Calu3 (cell line): ENCODE measurements at regions of chr19 and their contacts with region 1.

Region 1: DNA sequence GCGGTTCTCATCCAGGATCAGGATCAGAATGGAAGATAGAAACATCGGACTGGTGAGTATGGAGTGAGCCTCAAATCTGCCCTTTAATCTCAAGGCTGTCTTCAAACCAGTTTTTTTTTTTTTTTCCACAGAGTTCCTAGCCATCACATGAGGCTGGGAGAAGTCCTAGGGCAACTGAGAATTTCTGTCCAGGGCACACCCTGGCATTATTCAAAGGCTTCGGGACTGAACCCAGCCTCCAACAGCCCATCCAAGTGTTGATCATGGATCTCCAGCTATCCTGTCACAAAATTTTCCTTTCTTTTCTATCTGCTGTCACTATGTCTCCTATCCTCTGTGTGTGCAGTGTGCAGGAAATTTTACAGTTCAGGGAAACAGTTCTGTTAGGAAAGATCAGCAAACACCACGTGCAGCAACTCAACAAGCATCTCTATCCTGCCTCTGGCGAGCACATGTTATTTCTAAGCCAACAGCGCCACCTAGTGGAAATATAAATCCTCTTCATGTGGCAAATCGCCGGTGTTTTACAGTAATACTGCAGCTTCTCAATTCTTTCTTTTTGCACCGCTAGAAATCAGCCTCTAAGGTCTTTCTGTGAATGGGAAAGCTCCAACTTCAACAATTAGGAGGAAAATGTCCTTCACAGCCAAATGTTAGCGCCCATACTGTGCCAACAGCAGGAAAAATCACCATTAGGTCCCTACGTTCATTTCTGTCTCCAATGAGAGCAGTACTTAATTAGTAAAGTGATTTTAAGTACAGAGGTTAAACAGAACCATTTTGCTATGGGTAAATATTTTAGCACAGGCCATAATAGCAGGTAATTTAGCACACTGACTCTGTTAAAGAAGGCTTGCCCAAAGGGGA is 21.4 kb upstream of the ZNF181 start:
- DNase-seq: peak; percentile 68
- H3K4me3 Mint-ChIP-seq: no peak overlapping the region
- H3K27ac Mint-ChIP-seq: no peak overlapping the region
- H3K4me1 Mint-ChIP-seq: no peaks in the 10 kb centered on the region
- H3K27me3 Mint-ChIP-seq: no peaks in the 10 kb centered on the region
- CTCF ChIP-seq: peak; percentile 77

Region 2: GRCh38 chr19:34375598-34375997 is 337.0 kb before region 1 on chr19:
- CTCF ChIA-PET with region 1: no interaction called
- intact Hi-C with region 1: no loop called
- DNase-seq: no peak
- H3K4me3 Mint-ChIP-seq: no peak overlapping the region
- H3K27ac Mint-ChIP-seq: no peak overlapping the region
- H3K4me1 Mint-ChIP-seq: no peaks in the 10 kb centered on the region
- H3K27me3 Mint-ChIP-seq: no peaks in the 10 kb centered on the region
- CTCF ChIP-seq: no peak

Region 3: DNA sequence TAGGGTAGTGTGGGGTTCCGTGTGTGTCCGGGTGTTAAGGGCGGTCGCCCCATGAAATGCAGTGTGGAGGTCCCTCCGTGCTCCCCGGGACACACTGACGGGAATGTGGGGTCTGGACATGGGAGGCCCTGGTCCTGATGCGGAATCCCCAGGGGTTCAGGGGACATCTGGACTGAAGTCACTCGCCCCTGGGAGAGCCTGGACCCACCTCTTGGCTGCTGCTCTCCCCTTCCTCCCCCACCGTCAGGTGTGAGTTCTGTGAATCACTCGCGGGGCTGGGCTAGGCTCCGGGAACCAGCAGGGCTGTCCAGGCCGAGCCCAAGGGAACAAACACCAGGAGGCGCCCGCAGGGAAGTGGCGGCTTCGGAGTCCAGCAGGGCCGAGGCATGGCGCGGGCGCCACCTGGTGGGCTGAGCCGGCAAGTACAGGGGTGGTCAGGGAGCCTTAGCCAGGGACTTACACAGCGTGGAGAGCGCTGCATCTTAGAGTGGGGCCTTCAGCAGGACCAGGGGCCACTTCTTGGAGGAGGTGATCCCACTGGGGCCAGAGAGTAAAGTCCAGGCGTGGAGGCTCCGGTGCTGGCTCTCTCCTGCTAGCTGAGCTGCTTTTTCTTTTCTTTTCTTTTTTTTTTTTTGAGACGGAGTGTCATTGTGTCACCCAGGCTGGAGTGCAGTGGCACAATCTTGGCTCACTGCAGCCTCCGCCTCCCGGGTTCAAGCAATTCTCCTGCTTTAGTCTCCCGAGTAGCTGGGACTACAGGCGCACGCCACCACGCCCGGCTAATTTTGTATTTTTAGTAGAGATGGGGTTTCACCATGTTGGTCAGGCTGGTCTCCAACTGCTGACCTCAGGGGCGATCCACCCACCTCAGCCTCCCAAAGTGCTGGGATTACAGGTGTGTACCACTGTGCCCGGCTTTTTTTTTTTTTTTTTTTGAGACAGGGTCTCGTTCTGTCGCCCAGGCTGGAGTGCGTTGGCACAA is 211.0 kb before region 1 on chr19:
- CTCF ChIA-PET with region 1: no interaction called
- intact Hi-C with region 1: loop called (anchors 1 kb)
- DNase-seq: peak; percentile 99
- H3K4me3 Mint-ChIP-seq: no peak overlapping the region
- H3K27ac Mint-ChIP-seq: no peak overlapping the region
- H3K4me1 Mint-ChIP-seq: peaks cover 6% of the 10 kb centered on the region
- H3K27me3 Mint-ChIP-seq: no peaks in the 10 kb centered on the region
- CTCF ChIP-seq: peak; percentile 99

Region 4: DNA sequence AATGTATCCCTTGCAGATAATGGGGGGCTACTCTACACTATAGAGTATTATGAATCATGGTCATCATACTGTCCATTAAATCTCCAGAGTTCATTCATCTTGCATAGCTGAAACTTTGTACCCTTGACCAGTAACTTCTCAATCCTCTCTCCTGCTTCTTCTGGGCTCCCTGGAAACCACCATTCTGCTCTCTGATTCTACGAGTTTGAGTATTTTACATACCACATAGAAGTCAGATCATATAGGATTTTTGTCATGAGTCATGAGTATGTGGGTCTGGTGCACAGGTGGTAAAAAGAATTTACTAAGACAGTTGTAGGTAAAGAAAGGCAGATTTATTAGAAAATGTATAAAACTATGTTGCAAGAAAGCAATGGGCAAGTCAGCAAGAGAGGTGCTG is 189.2 kb before region 1 on chr19:
- CTCF ChIA-PET with region 1: no interaction called
- intact Hi-C with region 1: no loop called
- DNase-seq: no peak
- H3K4me3 Mint-ChIP-seq: no peak overlapping the region
- H3K27ac Mint-ChIP-seq: no peak overlapping the region
- H3K4me1 Mint-ChIP-seq: no peaks in the 10 kb centered on the region
- H3K27me3 Mint-ChIP-seq: peaks cover 49% of the 10 kb centered on the region
- CTCF ChIP-seq: no peak

Region 5: GRCh38 chr19:34556488-34556887 is 156.1 kb before region 1 on chr19:
- CTCF ChIA-PET with region 1: no interaction called
- intact Hi-C with region 1: loop called (anchors 1 kb)
- DNase-seq: peak; percentile 60
- H3K4me3 Mint-ChIP-seq: no peak overlapping the region
- H3K27ac Mint-ChIP-seq: no peak overlapping the region
- H3K4me1 Mint-ChIP-seq: no peaks in the 10 kb centered on the region
- H3K27me3 Mint-ChIP-seq: peaks cover 88% of the 10 kb centered on the region
- CTCF ChIP-seq: peak; percentile 16

Region 6: GRCh38 chr19:34639491-34640085 is 73.0 kb before region 1 on chr19:
- CTCF ChIA-PET with region 1: no interaction called
- intact Hi-C with region 1: loop called (anchors 1 kb)
- DNase-seq: peak; percentile 68
- H3K4me3 Mint-ChIP-seq: no peak overlapping the region
- H3K27ac Mint-ChIP-seq: no peak overlapping the region
- H3K4me1 Mint-ChIP-seq: no peaks in the 10 kb centered on the region
- H3K27me3 Mint-ChIP-seq: peaks cover 19% of the 10 kb centered on the region
- CTCF ChIP-seq: peak; percentile 72

Region 7: DNA sequence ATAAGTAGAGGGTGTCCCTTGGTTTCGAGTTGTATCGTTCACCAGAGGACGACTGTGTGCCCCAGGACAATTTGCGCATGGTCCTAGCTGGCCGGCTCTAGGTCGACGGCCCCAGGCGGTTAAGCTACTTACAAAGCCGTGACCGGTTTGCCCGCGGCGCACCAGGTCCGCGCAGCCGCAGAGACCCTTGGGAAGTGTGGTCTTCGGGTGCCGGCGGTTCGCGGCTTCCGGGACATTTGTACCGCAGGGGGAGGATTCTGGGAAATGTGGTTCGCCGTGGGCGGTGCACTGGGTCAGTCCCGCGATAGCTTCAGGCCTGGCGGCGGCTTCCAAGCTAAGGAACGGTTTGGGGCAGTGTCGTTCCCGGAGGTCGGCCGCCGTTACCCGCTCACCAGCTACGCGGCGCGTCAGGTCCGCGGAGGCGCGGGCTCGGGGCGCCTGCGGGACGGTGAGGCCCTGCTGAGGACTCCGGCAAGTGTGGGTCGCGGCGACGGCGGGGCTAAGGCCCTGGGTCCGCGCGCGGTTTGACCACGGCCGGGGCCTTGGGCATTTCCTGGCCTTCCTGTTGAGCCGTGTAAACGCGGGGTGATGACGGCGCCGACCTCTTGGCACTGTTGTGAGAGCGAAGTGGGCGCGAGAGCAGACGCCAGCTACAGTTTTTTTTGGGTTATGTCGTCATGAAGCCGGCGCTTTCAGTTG is 35.1 kb before region 1 on chr19 and contains the start of gene ZNF302:
- CTCF ChIA-PET with region 1: no interaction called
- intact Hi-C with region 1: no loop called
- DNase-seq: peak; percentile 96
- H3K4me3 Mint-ChIP-seq: peak within 1 kb of the TSS; percentile 90
- H3K27ac Mint-ChIP-seq: peak within 1 kb of the TSS; percentile 99
- H3K4me1 Mint-ChIP-seq: peaks cover 7% of the 10 kb centered on the region
- H3K27me3 Mint-ChIP-seq: no peaks in the 10 kb centered on the region
- CTCF ChIP-seq: no peak
- total RNA-seq, gene ZNF302: 20.1 and 23.2 TPM in 2 replicates